Common myeloid progenitor, CD34-positive (primary cell): ENCODE measurements at regions of chr1 and their contacts with region 1.

Region 1: DNA sequence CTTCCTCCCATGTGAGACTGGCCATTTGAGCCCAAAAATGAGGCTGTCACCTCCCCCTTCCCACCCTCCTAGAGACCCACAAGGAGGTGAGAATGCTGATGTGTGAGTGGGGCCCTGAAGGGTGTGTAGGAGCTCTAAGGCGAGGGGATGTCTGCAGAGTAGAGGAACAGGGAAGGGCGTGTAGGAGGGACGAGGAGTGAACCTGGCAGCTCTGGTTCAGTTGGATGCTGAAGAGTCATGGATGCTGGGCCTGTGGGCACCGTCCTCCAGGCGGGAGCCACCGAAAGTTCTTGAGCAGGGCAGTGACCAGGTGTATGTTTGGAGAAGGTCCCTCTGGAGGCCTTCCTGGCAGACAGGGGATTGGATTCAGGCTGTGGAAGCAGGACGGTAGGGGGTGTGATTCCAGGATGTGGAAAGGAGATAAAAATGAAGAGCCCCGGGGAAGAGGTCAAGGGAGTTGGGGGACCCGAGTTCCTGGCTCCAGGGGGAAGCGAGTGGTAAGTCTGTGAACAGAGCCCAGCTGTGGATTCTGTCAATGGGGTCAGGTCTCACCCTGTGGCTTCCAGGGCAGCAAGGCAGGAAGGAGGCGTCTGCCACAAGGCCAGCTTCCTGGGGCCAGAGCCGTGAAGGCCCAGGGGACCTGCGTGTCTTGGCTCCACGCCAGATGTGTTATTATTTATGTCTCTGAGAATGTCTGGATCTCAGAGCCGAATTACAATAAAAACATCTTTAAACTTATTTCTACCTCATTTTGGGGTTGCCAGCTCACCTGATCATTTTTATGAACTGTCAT is 7.9 kb downstream of the SAMD11 start:
- DNase-seq: no peak
- H3K4me3 ChIP-seq: no peak overlapping the region
- H3K27ac ChIP-seq: no peak overlapping the region
- H3K4me1 ChIP-seq: peaks cover 0 to 8% (median 6%) of the 10 kb centered on the region in 4 experiments
- H3K27me3 ChIP-seq: peaks cover 0 to 66% (median 10%) of the 10 kb centered on the region in 5 experiments

Region 2: GRCh38 chr1:904310-904950 is 27.1 kb before region 1 on chr1:
- CTCF ChIA-PET with region 1: interaction called, 20 read pairs
- POLR2A ChIA-PET with region 1: no interaction called
- DNase-seq: peak; percentile 72 to 87 (median 87)
- H3K4me3 ChIP-seq: peak overlapping the region in 2 of 7 experiments; percentile 23 to 40
- H3K27ac ChIP-seq: no peak overlapping the region
- H3K4me1 ChIP-seq: peaks cover 5 to 36% (median 25%) of the 10 kb centered on the region in 4 experiments
- H3K27me3 ChIP-seq: peaks cover 0 to 50% (median 10%) of the 10 kb centered on the region in 5 experiments

Region 3: GRCh38 chr1:912740-913301 is 18.8 kb before region 1 on chr1:
- CTCF ChIA-PET with region 1: interaction called, 13 read pairs
- POLR2A ChIA-PET with region 1: no interaction called
- DNase-seq: peak in 2 of 3 donors; percentile 58 to 64
- H3K4me3 ChIP-seq: peak overlapping the region in 3 of 7 experiments; percentile 0 to 24 (median 20)
- H3K27ac ChIP-seq: no peak overlapping the region
- H3K4me1 ChIP-seq: peaks cover 0 to 73% (median 53%) of the 10 kb centered on the region in 4 experiments
- H3K27me3 ChIP-seq: peaks cover 0 to 2% (median 0%) of the 10 kb centered on the region in 5 experiments

Region 4: DNA sequence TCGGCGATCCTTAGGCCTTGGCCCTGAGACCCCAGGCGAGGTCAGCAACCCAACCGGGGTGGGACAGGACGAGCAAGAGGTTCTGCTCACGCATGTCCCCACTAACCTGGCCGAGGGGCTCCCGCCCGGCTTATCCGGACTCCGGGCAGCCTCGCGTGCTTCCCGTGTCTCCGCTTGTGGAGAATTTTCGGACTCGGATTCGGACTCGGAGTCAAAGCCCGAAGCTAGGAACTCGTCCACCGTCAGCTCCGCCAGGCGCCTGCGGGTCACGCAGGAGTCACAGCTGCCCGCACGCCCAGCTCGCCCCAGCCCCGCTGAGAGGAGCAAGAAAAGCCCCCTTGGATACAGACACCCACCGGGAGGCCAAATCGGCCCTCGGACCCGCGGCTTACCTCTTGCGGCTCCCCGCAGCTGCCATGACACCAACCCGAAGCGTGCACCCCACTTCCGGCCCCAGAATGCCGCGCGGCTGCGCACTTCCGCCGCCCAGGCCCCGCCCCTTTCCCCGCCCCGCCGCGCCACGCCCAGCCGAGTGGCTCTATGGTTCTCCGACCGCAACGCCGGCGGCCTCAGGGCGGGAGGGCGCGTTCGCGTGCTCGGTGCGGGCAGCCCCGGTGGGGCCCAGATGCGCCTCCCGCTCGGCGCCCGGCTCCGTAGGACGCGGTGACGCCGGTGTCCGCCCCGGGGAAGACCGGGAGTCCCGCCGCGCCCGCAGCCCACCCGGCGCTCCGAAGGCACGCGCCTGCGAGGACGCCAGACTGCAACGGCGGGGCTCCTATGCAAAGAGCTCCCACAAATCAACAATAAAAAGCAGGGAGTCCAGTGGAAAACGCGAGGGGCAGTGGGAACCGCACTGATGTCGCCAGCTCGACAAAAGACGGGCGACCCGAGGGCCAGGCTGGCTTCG is 27.5 kb after region 1 on chr1 and contains the start of gene NOC2L:
- CTCF ChIA-PET with region 1: no interaction called
- POLR2A ChIA-PET with region 1: no interaction called
- DNase-seq: peak; percentile 86 to 93 (median 92)
- H3K4me3 ChIP-seq: peak within 1 kb of the TSS; percentile 76 to 98 (median 89)
- H3K27ac ChIP-seq: peak within 1 kb of the TSS; percentile 61 to 85
- H3K4me1 ChIP-seq: peaks cover 0 to 49% (median 33%) of the 10 kb centered on the region in 4 experiments
- H3K27me3 ChIP-seq: peaks cover 0 to 22% (median 2%) of the 10 kb centered on the region in 5 experiments

Region 5: GRCh38 chr1:1019122-1019999 is 87.8 kb after region 1 on chr1:
- CTCF ChIA-PET with region 1: no interaction called
- POLR2A ChIA-PET with region 1: no interaction called
- DNase-seq: peak; percentile 61 to 77 (median 72)
- H3K4me3 ChIP-seq: peak overlapping the region in 5 of 7 experiments; percentile 28 to 71 (median 57)
- H3K27ac ChIP-seq: no peak overlapping the region
- H3K4me1 ChIP-seq: peaks cover 0 to 26% (median 21%) of the 10 kb centered on the region in 4 experiments
- H3K27me3 ChIP-seq: peaks cover 0 to 37% (median 8%) of the 10 kb centered on the region in 5 experiments